Gastrocnemius medialis (tissue), 4 donors: ENCODE measurements at regions of chr1 and their contacts with region 1.

Region 1: DNA sequence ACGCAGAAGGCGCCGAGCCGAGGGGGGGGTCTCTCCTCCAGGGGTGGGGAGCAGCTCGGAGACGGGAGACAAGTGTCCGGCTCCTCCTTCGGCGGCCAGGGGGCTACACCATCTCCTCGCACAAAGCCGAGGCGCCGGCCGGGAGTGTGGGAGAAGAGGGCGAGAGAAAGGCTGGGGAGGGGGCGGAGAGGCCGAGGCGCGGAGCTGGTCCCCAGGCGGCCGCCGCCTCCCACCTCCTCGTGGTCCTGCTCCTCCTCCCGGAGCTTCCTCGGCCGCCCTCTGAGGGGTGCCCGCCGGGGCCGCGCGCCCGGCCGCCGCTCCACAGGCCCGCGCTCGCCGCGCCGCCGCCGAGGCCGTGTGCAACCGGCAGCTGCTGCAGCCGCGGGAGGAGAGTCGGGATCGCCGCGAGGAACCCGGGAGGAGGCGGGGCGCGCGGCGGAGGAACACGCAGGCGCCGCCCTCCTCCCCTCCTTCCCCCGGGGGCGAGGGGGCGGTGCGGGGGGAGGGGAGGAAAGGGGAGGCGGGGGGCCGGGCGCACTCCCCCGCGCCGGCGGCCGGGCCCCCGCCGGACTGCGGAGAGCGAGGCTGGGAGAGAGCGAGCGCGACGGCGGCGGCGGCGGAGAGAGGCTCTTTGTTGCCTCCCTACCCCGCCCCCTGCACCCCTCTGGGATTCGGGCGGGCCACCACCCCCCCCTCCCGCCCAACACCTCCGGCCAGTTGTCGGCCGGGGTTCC is at the start of gene ENAH:
- DNase-seq: peak; percentile 78 to 82
- ATAC-seq: peak; percentile 54 to 65
- H3K4me3 ChIP-seq: peak within 1 kb of the TSS; percentile 66 to 92 (median 84)
- H3K27ac ChIP-seq: peak within 1 kb of the TSS; percentile 97 to 98 (median 98)
- H3K4me1 ChIP-seq: peaks cover 38 to 56% of the 10 kb centered on the region in 2 donors
- H3K27me3 ChIP-seq: no peaks in the 10 kb centered on the region
- CTCF ChIP-seq: peak in 1 of 5 experiments; percentile 10
- POLR2A ChIP-seq: peak; percentile 97 to 98
- total RNA-seq, gene ENAH: 56.1 to 112 (median 62.2) TPM

Region 2: GRCh38 chr1:225428068-225428880 is 224.6 kb before region 1 on chr1:
- in situ Hi-C with region 1: no loop called
- intact Hi-C with region 1: loop called (anchors 5 kb)
- DNase-seq: peak; percentile 89
- ATAC-seq: peak; percentile 91 to 93
- H3K4me3 ChIP-seq: peak overlapping the region; percentile 80 to 98 (median 96)
- H3K27ac ChIP-seq: peak overlapping the region; percentile 89 to 95 (median 92)
- H3K4me1 ChIP-seq: peaks cover 19 to 35% of the 10 kb centered on the region in 2 donors
- H3K27me3 ChIP-seq: no peaks in the 10 kb centered on the region
- CTCF ChIP-seq: no peak
- POLR2A ChIP-seq: peak; percentile 83 to 92

Region 3: GRCh38 chr1:225508538-225509375 is 144.1 kb before region 1 on chr1:
- in situ Hi-C with region 1: loop called in 1 of 4 experiments (anchors 10 kb)
- intact Hi-C with region 1: loop called (anchors 5 kb)
- DNase-seq: peak; percentile 43 to 65
- ATAC-seq: peak; percentile 99 to 100
- H3K4me3 ChIP-seq: peak overlapping the region in 1 of 4 donors; percentile 6
- H3K27ac ChIP-seq: peak overlapping the region; percentile 75 to 89 (median 84)
- H3K4me1 ChIP-seq: peaks cover 12 to 27% of the 10 kb centered on the region in 2 donors
- H3K27me3 ChIP-seq: no peaks in the 10 kb centered on the region
- CTCF ChIP-seq: no peak
- POLR2A ChIP-seq: no peak

Region 4: DNA sequence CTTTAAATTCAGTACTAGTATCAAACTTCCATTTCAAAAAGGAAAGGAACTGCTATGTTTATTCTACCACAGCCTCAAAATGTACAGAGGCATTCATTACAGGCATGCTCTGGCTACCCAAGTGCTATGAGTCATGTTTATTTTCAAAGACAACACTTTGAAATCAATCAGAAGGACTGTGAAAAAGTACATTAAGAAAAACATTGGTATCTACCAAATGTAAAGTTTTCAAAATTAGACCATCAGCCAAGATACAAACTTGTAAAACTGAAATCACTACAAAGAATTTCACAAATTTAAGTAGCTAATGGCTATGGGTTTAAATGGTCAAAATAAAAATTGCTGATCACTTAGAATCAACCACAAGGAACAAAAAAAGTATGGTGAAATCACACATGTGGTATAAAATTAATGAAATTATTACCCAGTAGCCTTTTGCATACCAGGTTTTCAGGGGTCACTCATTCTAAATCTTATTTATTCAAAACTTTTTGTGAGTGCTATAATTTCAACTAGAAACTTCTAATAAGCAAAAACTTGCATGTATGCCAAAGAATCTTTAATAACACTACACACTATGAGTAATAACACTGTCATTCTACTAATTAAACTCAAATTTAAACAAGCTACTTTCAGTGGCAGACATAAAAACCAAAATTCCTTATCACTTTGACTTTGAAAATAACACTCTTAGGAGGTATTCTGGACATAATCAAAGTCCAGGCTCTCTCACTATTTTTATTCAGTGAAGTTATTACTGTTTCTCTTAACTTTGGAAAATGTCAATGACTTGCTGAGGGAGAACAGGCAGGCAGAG is 49.1 kb before region 1 on chr1:
- in situ Hi-C with region 1: no loop called
- intact Hi-C with region 1: loop called (anchors 2 kb)
- DNase-seq: no peak
- ATAC-seq: peak; percentile 78 to 90
- H3K4me3 ChIP-seq: peak overlapping the region; percentile 1 to 34 (median 14)
- H3K27ac ChIP-seq: peak overlapping the region; percentile 74 to 79 (median 77)
- H3K4me1 ChIP-seq: peaks cover 47 to 53% of the 10 kb centered on the region in 2 donors
- H3K27me3 ChIP-seq: no peaks in the 10 kb centered on the region
- CTCF ChIP-seq: no peak
- POLR2A ChIP-seq: no peak

Region 5: DNA sequence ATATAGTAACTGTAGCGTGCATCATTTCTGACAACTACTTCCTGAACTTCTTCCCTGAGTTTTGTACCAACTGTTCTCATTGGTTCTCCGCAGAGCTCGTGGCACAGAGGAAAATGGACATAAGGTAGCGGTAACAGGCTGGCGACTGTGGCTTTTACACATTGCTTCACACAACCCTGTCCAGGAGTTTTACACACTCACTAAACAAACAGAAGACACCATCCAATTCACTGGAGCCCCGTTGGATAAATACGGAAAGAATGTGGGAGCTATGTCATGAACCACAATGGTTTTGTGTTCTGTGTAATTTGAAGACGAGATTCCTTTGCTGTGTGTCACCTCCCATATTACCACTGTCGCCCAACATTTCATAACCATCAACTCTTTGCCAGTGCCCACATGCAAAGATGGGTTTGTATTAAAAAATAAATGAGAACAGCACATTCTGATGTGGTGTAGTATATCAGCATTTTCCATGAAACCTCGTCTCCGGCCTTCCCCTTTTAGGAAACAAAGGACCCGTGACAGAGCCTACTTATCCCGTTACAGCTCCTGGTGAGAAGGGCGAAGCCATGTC is 47.4 kb after region 1 on chr1:
- in situ Hi-C with region 1: no loop called
- intact Hi-C with region 1: loop called (anchors 2 kb)
- DNase-seq: peak; percentile 58 to 60
- ATAC-seq: peak; percentile 89 to 90
- H3K4me3 ChIP-seq: peak overlapping the region; percentile 41 to 57 (median 50)
- H3K27ac ChIP-seq: peak overlapping the region; percentile 85 to 93 (median 87)
- H3K4me1 ChIP-seq: peaks cover 13 to 27% of the 10 kb centered on the region in 2 donors
- H3K27me3 ChIP-seq: no peaks in the 10 kb centered on the region
- CTCF ChIP-seq: no peak
- POLR2A ChIP-seq: no peak

Region 6: DNA sequence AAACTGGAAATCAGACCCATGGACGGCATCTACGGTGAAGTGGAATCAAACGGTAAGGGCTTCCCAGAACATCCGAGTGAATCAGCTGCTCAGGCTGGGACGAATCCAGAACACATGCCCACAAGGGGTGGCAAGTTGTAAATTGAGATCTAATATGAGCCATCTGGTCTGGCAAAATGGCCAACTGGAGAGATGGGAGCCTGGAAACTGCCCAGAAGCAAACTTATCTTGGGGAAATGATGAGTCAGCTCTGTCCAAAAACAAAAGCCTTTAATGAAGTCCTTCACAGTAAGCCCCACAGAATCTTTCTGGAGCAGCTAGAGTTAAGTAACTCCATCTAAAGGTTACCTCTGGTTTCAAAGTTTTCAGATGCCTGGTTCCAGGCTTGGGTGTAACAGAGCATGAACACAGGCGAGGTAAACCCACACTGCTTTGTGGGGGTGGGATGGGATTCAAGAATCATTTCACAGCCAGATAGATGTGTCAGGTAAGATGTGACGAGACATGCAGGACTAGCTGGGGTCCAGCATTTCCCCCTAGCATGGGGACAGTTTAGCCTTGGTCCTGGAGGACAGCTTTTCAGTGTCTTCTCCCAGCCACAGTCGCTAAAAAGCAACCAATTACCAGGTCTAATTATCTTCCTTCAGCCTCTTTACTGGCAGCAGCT is 114.2 kb after region 1 on chr1:
- in situ Hi-C with region 1: loop called in 1 of 4 experiments (anchors 10 kb)
- intact Hi-C with region 1: loop called (anchors 2 kb)
- DNase-seq: peak; percentile 65 to 67
- ATAC-seq: peak; percentile 78 to 83
- H3K4me3 ChIP-seq: peak overlapping the region in 2 of 4 donors; percentile 5 to 27
- H3K27ac ChIP-seq: peak overlapping the region; percentile 64 to 84 (median 70)
- H3K4me1 ChIP-seq: peaks cover 38 to 47% of the 10 kb centered on the region in 2 donors
- H3K27me3 ChIP-seq: no peaks in the 10 kb centered on the region
- CTCF ChIP-seq: no peak
- POLR2A ChIP-seq: no peak

Region 7: DNA sequence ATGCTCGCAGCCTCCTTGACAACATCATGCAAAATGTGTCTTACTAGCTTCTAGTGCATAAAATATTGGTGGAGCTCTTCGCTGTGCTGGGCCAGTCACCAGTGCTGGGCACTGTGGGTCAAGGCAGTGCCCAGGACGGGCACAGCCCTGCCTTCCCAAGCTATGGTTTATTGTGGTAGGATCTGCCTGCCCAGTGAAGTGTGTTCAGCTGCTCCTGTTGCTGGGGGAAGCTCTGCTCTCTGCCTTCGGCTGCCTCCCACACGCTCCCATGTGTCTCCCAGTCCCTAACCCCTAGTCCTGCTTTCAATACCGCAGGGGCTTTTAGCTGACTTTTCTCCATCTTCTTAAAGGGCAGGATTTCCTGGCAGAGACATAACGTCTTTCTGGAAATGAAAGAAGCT is 172.7 kb after region 1 on chr1:
- in situ Hi-C with region 1: no loop called
- intact Hi-C with region 1: no loop called
- DNase-seq: peak in 1 of 2 donors; percentile 8
- ATAC-seq: no peak
- H3K4me3 ChIP-seq: no peak overlapping the region
- H3K27ac ChIP-seq: peak overlapping the region in 3 of 4 donors; percentile 29 to 67 (median 49)
- H3K4me1 ChIP-seq: peaks cover 52 to 66% of the 10 kb centered on the region in 2 donors
- H3K27me3 ChIP-seq: no peaks in the 10 kb centered on the region
- CTCF ChIP-seq: no peak
- POLR2A ChIP-seq: no peak